Activated B cell treated with CpG ODN at 0.5 μM for 24 hours (primary cell): ENCODE measurements at regions of chr6 and their contacts with region 1.

Region 1: GRCh38 chr6:27472617-27473400 is at the start of gene ZNF184:
- DNase-seq: peak; percentile 85
- ATAC-seq: peak; percentile 92
- H3K4me3 Mint-ChIP-seq: peak within 1 kb of the TSS; percentile 95
- H3K27ac Mint-ChIP-seq: peak within 1 kb of the TSS; percentile 95
- H3K4me1 Mint-ChIP-seq: peaks cover 34% of the 10 kb centered on the region
- H3K27me3 Mint-ChIP-seq: no peaks in the 10 kb centered on the region
- CTCF ChIP-seq: no peak
- total RNA-seq, gene ZNF184: 8.1 and 8.6 TPM in 2 replicates

Region 2: DNA sequence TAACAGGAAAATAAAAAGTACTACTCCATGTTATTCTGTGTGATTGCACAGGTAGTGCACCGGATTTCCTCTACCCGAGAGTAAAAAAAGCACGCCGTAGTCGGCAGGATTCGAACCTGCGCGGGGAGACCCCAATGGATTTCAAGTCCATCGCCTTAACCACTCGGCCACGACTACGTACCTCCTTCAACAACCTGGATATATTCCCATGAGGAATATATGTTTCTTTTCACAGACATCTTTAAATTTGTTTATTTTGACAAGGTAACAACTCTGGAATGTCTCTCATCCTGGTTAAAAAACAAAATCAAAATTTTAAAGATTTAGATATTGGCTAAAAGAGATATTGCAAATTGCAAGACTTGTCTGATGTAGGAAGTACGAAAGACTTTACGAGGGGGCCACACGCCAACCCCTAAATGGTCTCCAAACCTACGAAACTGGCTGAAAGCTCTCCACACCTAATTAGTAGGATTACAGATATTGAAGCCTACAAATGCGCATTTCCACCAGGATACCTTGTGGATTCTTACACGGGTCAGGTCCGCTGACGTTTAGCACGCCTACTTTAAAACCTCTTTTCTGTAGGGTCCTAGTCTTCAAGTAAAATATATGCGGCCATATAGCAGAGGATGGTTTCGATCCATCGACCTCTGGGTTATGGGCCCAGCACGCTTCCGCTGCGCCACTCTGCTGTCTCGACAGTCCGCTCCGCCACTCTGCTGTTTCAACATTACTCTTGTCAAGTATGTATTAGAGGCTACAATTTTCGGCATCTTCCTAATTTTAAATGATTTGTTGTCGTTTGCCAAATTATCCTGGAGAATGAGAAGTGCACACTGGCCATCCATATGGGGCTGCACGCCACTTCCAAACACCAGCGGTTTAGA is 1160.1 kb before region 1 on chr6:
- CTCF ChIA-PET with region 1: no interaction called
- POLR2A ChIA-PET with region 1: interaction called, 3 read pairs
- intact Hi-C with region 1: loop called (anchors 10 kb)
- DNase-seq: peak; percentile 63
- ATAC-seq: peak; percentile 79
- H3K4me3 Mint-ChIP-seq: peak overlapping the region; percentile 90
- H3K27ac Mint-ChIP-seq: peak overlapping the region; percentile 95
- H3K4me1 Mint-ChIP-seq: peaks cover 28% of the 10 kb centered on the region
- H3K27me3 Mint-ChIP-seq: peaks cover 5% of the 10 kb centered on the region
- CTCF ChIP-seq: no peak

Region 3: DNA sequence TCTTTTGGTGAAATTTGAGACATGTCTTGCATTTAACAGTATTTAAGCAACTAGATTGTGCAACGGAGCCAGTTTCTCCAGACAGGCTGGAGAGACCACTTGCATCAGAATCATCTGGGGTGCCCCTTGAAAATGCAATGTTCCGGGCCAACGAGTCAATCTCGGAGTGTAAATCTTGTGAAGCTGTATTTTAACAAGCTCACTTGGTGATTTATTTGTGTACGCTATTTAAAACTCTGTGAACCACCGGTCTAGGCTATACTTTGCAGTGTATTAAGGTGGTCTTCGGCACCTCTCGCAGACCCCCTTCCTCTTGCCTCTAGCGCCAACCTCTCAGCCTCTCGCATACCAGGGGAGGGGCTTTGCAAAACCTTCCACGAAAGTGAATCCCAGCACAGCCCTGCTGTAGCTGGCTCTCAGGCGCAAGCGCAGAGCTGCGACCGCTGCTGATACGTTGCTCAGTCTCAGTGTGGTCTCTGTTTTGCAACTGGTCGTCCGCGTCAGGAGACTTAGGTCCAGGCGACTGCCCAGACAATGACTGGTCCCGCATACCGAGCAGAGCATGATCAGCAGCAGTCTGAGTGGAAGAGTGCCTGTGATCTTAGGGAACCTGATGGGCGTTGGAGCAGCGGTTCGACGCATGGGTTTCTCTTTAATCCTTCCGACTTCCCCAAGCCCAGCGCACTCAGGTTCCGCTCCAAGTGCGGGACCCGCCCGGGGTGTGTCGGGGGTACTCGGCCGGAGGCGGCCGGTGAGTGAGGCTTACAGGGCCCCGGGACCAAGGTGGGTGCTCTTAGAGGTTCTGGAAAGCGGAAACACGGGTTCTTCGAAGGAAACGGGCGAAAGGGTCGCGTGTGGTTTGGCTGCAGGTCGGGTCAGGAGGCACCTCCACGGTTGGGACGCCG is 84.3 kb before region 1 on chr6 and contains the start of gene ZNF391:
- CTCF ChIA-PET with region 1: no interaction called
- POLR2A ChIA-PET with region 1: interaction called, 16 read pairs
- intact Hi-C with region 1: loop called (anchors 1 kb)
- DNase-seq: peak; percentile 73
- ATAC-seq: peak; percentile 88
- H3K4me3 Mint-ChIP-seq: peak within 1 kb of the TSS; percentile 97
- H3K27ac Mint-ChIP-seq: peak within 1 kb of the TSS; percentile 95
- H3K4me1 Mint-ChIP-seq: peaks cover 13% of the 10 kb centered on the region
- H3K27me3 Mint-ChIP-seq: no peaks in the 10 kb centered on the region
- CTCF ChIP-seq: no peak
- total RNA-seq, gene ZNF391: 4.8 and 5.9 TPM in 2 replicates

Region 4: GRCh38 chr6:27687154-27688013 is 214.6 kb after region 1 on chr6:
- CTCF ChIA-PET with region 1: no interaction called
- POLR2A ChIA-PET with region 1: interaction called, 5 read pairs
- intact Hi-C with region 1: loop called (anchors 1 kb)
- DNase-seq: peak; percentile 63
- ATAC-seq: peak; percentile 73
- H3K4me3 Mint-ChIP-seq: peak overlapping the region; percentile 93
- H3K27ac Mint-ChIP-seq: peak overlapping the region; percentile 90
- H3K4me1 Mint-ChIP-seq: peaks cover 16% of the 10 kb centered on the region
- H3K27me3 Mint-ChIP-seq: peaks cover 4% of the 10 kb centered on the region
- CTCF ChIP-seq: no peak

Region 5: GRCh38 chr6:27700337-27700736 is 227.5 kb after region 1 on chr6:
- CTCF ChIA-PET with region 1: no interaction called
- POLR2A ChIA-PET with region 1: no interaction called
- intact Hi-C with region 1: no loop called
- DNase-seq: no peak
- ATAC-seq: no peak
- H3K4me3 Mint-ChIP-seq: no peak overlapping the region
- H3K27ac Mint-ChIP-seq: no peak overlapping the region
- H3K4me1 Mint-ChIP-seq: peaks cover 1% of the 10 kb centered on the region
- H3K27me3 Mint-ChIP-seq: no peaks in the 10 kb centered on the region
- CTCF ChIP-seq: no peak

Region 6: DNA sequence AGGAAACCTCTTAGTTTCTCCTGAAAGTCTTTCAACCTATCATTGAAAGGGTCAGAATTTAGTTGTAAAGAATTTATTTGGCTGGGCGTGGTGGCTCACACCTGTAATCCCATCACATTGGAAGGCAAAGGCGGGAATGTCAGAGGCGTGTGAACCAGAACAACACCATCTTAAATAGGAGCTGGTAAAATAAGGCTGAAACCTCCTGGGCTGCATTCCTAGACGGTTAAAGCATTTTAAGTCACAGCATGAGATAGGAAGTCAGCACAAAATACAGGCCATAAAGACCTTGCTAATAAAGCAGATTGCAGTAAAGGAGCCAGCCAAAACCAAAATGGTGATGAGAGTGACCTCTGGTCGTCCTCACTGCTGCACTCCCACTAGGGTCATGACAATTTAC is 409.8 kb after region 1 on chr6:
- CTCF ChIA-PET with region 1: no interaction called
- POLR2A ChIA-PET with region 1: no interaction called
- intact Hi-C with region 1: no loop called
- DNase-seq: no peak
- ATAC-seq: no peak
- H3K4me3 Mint-ChIP-seq: no peak overlapping the region
- H3K27ac Mint-ChIP-seq: no peak overlapping the region
- H3K4me1 Mint-ChIP-seq: no peaks in the 10 kb centered on the region
- H3K27me3 Mint-ChIP-seq: no peaks in the 10 kb centered on the region
- CTCF ChIP-seq: no peak

Region 7: DNA sequence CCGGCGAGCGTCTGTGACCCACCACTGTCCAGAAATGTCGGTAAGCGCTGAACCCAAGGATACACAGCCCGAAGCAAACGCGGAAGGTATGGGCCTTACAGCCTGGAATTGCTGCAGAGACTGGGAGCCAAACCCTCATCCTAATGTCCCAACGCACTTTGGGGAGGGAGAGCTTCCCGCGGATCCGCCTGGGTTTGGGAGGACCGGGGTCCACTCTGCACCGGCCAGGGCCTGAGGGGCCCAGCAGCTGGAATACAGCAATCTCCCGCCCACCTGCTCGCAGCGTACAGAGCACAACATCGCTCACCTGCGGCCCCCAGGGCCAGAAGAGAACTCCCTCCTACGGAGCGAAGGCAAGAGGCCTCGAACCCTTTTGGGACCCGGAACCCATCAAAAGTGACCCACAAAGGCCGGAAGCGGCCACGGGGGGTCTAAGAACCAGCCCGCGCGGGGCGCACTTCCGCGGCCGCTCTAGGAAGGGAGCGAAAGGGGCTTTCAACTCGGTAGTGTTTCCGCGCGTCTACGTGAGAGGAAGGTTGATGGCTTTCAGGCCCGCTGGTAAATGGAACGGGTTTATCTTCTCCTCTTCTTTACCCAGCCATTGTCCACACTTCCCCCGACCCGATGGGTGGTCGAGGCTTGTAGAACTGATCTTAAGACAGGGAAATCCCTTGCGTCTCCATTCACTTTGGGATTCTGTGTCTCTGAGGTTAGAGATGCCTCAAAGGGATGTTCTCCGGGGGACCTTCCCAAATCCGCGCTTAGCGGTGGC is 926.7 kb after region 1 on chr6 and contains the start of gene ZSCAN12:
- CTCF ChIA-PET with region 1: no interaction called
- POLR2A ChIA-PET with region 1: no interaction called
- intact Hi-C with region 1: loop called (anchors 2 kb)
- DNase-seq: peak; percentile 79
- ATAC-seq: peak; percentile 89
- H3K4me3 Mint-ChIP-seq: peak within 1 kb of the TSS; percentile 97
- H3K27ac Mint-ChIP-seq: peak within 1 kb of the TSS; percentile 95
- H3K4me1 Mint-ChIP-seq: peaks cover 42% of the 10 kb centered on the region
- H3K27me3 Mint-ChIP-seq: peaks cover 34% of the 10 kb centered on the region
- CTCF ChIP-seq: no peak
- total RNA-seq, gene ZSCAN12: 12.8 and 13.0 TPM in 2 replicates

Region 8: GRCh38 chr6:28940858-28941680 is 1468.3 kb after region 1 on chr6:
- CTCF ChIA-PET with region 1: no interaction called
- POLR2A ChIA-PET with region 1: no interaction called
- intact Hi-C with region 1: loop called (anchors 1 kb)
- DNase-seq: peak; percentile 36
- ATAC-seq: peak; percentile 66
- H3K4me3 Mint-ChIP-seq: peak overlapping the region; percentile 95
- H3K27ac Mint-ChIP-seq: peak overlapping the region; percentile 88
- H3K4me1 Mint-ChIP-seq: peaks cover 47% of the 10 kb centered on the region
- H3K27me3 Mint-ChIP-seq: peaks cover 3% of the 10 kb centered on the region
- CTCF ChIP-seq: no peak